ENCODE measurements at regions of chr19 and their contacts with region 1.

Region 1: DNA sequence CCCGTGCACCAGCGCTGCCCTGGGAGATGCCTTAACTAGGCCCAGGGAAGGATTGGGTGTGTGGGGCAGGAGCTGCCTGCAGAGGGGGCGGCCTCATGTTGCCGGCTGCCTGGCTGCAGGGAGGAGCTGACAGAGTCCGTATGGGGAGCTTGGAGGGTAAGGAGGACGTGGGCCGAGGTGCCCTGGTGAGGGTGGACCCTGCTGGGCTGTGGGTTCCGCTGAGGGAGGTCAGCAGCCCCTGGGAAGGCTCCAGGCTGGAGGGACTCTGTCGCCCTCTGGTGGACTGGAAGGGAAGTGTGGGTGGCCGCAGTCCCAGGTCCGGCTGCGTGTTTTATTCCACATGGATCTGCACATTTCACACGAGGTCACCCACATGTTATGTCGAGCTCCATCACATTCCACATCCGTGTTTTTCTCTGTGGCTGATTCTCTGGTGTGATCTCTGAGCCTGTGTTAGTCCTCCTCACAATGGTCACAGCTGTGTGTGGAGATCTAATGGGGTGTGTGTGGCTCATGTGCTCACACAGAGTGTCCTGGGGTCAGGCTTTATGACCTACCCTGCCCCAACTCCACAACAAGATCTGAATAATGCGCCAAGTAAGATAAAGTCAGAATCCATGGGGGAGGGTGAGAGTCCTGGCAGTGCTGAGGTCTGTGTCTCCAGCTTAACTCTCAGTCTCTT is 1.8 kb upstream of the CEACAM8 start:
- DNase-seq: peak; percentile 25

Region 2: GRCh38 chr19:42440357-42441048 is 156.0 kb before region 1 on chr19:
- in situ Hi-C with region 1: loop called (anchors 25 kb)
- DNase-seq: peak; percentile 41

Region 3: GRCh38 chr19:42487032-42487797 is 109.3 kb before region 1 on chr19:
- in situ Hi-C with region 1: no loop called
- DNase-seq: no peak

Region 4: DNA sequence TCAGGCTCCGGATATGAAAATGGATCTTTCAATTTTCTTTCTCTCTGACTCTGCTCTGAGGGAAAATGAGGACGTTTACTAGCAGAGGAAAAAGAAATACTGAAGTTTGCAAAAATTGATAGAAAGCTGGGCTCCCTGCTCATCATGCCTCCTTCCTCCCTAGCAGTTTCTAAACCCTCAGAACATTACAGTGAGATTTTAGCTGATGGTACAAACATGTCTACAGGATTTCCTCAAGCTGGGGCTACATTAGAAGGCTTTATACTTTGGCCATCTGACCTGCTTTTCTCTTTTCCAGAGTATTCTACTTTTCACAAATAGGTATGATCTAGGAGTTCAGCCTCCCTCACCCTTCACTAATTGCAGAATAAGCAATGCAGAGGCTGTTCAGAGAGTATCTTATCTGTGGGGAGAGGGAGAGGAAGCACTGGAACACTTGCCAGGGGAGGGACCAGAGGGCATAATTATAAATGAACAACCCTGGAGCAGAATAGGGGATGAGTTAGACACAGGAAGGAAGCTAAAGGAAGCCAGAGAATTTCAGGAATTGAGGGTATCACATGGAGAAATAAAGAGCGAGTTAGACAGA is 98.3 kb before region 1 on chr19:
- in situ Hi-C with region 1: no loop called
- DNase-seq: no peak

Measured in G401 (cell line).